ENCODE measurements at regions of chr3 and their contacts with region 1.

Region 1: GRCh38 chr3:71859123-71859519 is 74.2 kb upstream of the PROK2 start:
- DNase-seq: no peak
- ATAC-seq: peak in 3 of 4 donors; percentile 64 to 76 (median 69)
- H3K4me3 ChIP-seq: no peak overlapping the region
- H3K27ac ChIP-seq: no peak overlapping the region
- H3K4me1 ChIP-seq: peaks cover 0 to 14% (median 0%) of the 10 kb centered on the region in 12 donors
- H3K27me3 ChIP-seq: peaks cover 0 to 11% (median 0%) of the 10 kb centered on the region in 9 donors
- CTCF ChIP-seq: peak in 10 of 12 donors; percentile 9 to 35 (median 26)
- POLR2A ChIP-seq: no peak

Region 2: GRCh38 chr3:71710906-71711494 is 148.1 kb before region 1 on chr3:
- intact Hi-C with region 1: loop called in 1 of 10 experiments (anchors 5 kb)
- DNase-seq: no peak
- ATAC-seq: peak in 2 of 4 donors; percentile 47 to 58
- H3K4me3 ChIP-seq: no peak overlapping the region
- H3K27ac ChIP-seq: no peak overlapping the region
- H3K4me1 ChIP-seq: peaks cover 0 to 44% (median 6%) of the 10 kb centered on the region in 12 donors
- H3K27me3 ChIP-seq: no peaks in the 10 kb centered on the region
- CTCF ChIP-seq: peak; percentile 45 to 74 (median 58)
- POLR2A ChIP-seq: no peak

Region 3: DNA sequence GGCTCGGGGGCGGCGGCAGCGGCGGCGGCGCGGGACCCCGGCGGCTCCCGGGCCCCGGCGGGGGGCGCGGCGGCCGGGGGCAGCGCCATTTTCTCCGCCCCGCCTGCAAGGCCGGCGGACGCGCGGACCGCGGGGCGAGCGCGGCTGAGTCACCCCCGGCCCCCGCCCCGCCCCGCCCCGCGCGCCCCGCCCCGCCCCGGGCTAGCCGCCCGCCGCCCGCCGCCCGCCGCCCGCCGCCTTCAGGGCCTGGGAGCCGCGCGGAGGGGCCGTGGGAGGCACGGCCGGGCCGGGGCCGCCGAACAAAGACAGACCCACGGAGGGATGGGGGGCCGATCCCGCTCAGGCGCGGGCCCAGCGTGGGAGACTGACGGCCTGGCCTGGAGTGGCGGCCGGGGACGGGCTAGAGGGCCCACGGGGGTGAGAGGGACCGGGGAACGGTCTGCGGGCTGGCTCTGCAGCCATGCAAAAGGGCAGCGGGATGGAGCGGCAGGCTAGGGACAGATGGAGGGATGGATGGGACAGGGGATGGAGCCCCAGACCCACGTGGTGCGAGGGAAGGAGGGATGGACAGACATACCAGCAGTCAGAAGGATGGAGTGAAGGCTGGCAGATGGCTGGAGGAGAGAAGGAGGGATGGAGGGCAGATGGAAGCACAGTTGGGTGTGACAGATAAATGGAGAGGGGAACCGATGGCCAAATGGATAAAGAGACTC is 133.7 kb before region 1 on chr3 and contains the start of gene EIF4E3:
- intact Hi-C with region 1: loop called in 5 of 10 experiments (anchors 5 to 10 kb)
- DNase-seq: peak; percentile 40 to 76 (median 46)
- ATAC-seq: peak; percentile 15 to 75 (median 64)
- H3K4me3 ChIP-seq: peak within 1 kb of the TSS; percentile 73 to 96 (median 86)
- H3K27ac ChIP-seq: peak within 1 kb of the TSS; percentile 25 to 89 (median 75)
- H3K4me1 ChIP-seq: peaks cover 0 to 58% (median 12%) of the 10 kb centered on the region in 12 donors
- H3K27me3 ChIP-seq: no peaks in the 10 kb centered on the region
- CTCF ChIP-seq: no peak
- POLR2A ChIP-seq: no peak
- total RNA-seq, gene EIF4E3: 28.5 to 53.0 (median 47.1) TPM

Region 4: GRCh38 chr3:71734883-71735282 is 124.2 kb before region 1 on chr3:
- intact Hi-C with region 1: loop called in 2 of 10 experiments (anchors 5 to 10 kb)
- DNase-seq: no peak
- ATAC-seq: no peak
- H3K4me3 ChIP-seq: no peak overlapping the region
- H3K27ac ChIP-seq: no peak overlapping the region
- H3K4me1 ChIP-seq: peaks cover 0 to 4% (median 0%) of the 10 kb centered on the region in 12 donors
- H3K27me3 ChIP-seq: peaks cover 0 to 5% (median 0%) of the 10 kb centered on the region in 9 donors
- CTCF ChIP-seq: no peak
- POLR2A ChIP-seq: no peak